Ovary (tissue), 10 donors: ENCODE measurements at regions of chrX and their contacts with region 1.

Region 1: DNA sequence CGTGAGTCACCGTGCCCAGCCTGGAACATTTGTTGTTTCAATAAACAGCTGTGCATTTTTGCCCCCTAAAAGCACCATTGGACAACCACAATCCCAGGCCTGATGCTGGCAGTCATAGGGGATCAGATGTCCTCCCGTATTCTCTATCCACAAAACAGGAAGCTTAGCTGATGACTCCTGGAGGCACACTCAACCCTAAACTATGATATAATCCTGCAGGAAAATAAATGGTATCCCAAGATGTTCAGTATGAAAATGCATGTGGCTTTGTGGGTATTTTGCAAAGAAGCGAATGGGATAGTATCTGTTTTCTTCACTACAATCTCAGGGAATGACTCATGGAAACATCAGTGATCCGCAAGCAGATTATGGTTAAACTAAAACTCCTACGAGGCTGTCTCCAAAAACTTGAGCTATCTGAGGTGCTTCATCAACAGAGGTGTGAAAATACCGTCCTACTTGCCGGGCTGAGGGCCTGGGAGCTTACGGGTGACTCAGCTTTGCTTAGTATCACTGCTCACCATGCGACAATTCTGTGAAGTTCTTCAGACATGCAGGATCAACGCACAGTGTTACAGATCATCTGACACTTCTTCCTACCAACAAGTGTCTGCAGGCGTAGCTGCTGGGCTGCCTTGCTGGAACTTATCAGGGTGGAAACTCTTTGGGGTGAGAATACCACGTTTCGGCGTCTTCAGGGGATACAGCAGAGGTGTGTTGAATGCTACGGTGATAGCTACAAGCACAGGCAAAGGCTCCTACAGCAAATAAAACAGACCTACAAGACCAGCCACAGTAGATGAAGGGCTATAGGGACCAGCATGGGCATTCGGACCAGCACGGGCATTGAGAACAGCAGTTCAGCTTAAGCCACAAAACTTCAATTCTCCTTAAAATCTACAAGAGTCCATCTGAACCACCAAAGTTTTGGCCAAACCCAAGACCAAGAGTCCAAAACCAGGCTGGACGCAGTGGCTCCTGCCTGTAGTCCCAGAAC is 148.5 kb downstream of the DHRSX start:
- DNase-seq: no peak
- H3K4me3 ChIP-seq: no peak overlapping the region
- H3K27ac ChIP-seq: no peak overlapping the region
- H3K4me1 ChIP-seq: no peaks in the 10 kb centered on the region
- H3K27me3 ChIP-seq: no peaks in the 10 kb centered on the region
- CTCF ChIP-seq: no peak
- EP300 ChIP-seq: no peak
- POLR2A ChIP-seq: no peak

Region 2: DNA sequence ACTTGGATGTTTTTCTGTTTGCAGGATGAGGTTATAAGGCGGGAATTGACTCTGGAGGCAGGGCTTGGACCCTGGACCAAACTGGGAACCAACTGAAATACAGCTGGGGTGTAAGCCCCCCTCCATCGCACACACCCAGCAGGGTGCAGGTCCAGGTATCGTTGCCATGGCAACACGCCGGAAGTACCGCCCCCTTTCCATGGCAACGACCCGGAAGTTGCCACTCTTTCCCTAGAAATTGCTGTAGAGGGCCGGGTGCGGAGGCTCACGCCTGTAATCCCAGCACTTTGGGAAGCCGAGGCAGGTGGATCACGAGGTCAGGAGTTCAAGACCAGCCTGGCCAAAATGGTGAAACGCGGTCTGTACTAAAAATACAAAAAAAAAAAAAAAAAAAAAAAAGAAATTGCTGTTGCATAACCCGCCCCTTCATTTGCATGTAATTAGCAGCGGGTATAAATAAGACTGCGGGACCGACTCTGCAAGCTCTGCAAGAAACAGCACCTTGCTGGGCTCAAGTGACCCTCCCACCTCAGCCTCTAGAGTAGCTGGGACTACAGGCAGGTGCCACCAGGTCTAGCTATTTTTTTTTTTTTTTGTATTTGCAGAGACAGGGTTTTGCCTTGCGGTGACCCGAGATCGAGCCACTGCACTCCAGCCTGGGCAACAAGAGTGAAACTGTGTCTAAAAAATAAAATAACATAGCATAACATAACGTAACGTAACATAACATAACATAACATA is 1279.5 kb before region 1 on chrX:
- intact Hi-C with region 1: loop called in 1 of 4 experiments (anchors 5 kb)
- DNase-seq: no peak
- H3K4me3 ChIP-seq: no peak overlapping the region
- H3K27ac ChIP-seq: no peak overlapping the region
- H3K4me1 ChIP-seq: no peaks in the 10 kb centered on the region
- H3K27me3 ChIP-seq: no peaks in the 10 kb centered on the region
- CTCF ChIP-seq: no peak
- EP300 ChIP-seq: no peak
- POLR2A ChIP-seq: no peak

Region 3: GRCh38 chrX:2391869-2392606 is 39.7 kb after region 1 on chrX:
- intact Hi-C with region 1: no loop called
- DNase-seq: no peak
- H3K4me3 ChIP-seq: no peak overlapping the region
- H3K27ac ChIP-seq: no peak overlapping the region
- H3K4me1 ChIP-seq: no peaks in the 10 kb centered on the region
- H3K27me3 ChIP-seq: no peaks in the 10 kb centered on the region
- CTCF ChIP-seq: no peak
- EP300 ChIP-seq: no peak
- POLR2A ChIP-seq: no peak

Region 4: DNA sequence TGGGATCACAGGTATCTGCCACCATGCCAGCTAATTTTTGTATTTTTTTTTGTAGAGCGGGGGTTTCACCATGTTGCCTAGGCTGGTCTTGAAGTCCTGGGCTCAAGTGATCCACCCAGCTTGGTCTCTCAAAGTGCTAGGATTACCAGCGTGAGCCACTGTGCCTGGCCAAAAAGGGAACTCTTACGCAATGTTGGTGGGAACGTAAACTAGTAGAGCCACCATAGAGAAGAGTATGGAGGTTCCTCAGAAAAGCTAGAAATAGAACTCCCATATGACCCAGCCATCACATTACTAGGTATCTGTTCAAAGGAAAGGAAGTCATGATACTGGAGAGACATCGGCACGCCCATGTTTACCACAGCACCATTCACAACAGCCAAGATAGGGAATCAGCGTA is 1275.3 kb after region 1 on chrX:
- intact Hi-C with region 1: no loop called
- DNase-seq: no peak
- H3K4me3 ChIP-seq: no peak overlapping the region
- H3K27ac ChIP-seq: no peak overlapping the region
- H3K4me1 ChIP-seq: no peaks in the 10 kb centered on the region
- H3K27me3 ChIP-seq: no peaks in the 10 kb centered on the region
- CTCF ChIP-seq: no peak
- EP300 ChIP-seq: no peak
- POLR2A ChIP-seq: no peak